ENCODE measurements at regions of chr2 and their contacts with region 1.

Region 1: GRCh38 chr2:174688079-174688478 is 76.2 kb downstream of the CHRNA1 start:
- DNase-seq: peak; percentile 8
- ATAC-seq: peak; percentile 65
- H3K4me3 ChIP-seq: no peak overlapping the region
- H3K27ac ChIP-seq: no peak overlapping the region
- H3K4me1 ChIP-seq: no peaks in the 10 kb centered on the region
- H3K27me3 ChIP-seq: 0 out of 2 replicates have a peak, but pooled peaks cover 4% of the 10 kb centered on the region
- CTCF ChIP-seq: peak; percentile 25 to 61 (median 55); a peak in 3 of 6 replicates
- POLR2A ChIP-seq: no peak
- RAD21 ChIP-seq: peak; percentile 48

Region 2: GRCh38 chr2:174577967-174578589 is 110.0 kb before region 1 on chr2:
- CTCF ChIA-PET with region 1: interaction called, 35 read pairs
- POLR2A ChIA-PET with region 1: no interaction called
- RAD21 ChIA-PET with region 1: no interaction called
- intact Hi-C with region 1: loop called (anchors 2 kb)
- DNase-seq: no peak
- ATAC-seq: peak; percentile 80
- H3K4me3 ChIP-seq: no peak overlapping the region
- H3K27ac ChIP-seq: no peak overlapping the region
- H3K4me1 ChIP-seq: no peaks in the 10 kb centered on the region
- H3K27me3 ChIP-seq: no peaks in the 10 kb centered on the region
- CTCF ChIP-seq: peak; percentile 36 to 57 (median 47); a peak in 5 of 6 replicates
- POLR2A ChIP-seq: no peak
- RAD21 ChIP-seq: peak; percentile 64

Region 3: GRCh38 chr2:174673876-174674275 is 14.2 kb before region 1 on chr2:
- CTCF ChIA-PET with region 1: no interaction called
- POLR2A ChIA-PET with region 1: no interaction called
- RAD21 ChIA-PET with region 1: no interaction called
- intact Hi-C with region 1: no loop called
- DNase-seq: no peak
- ATAC-seq: no peak
- H3K4me3 ChIP-seq: no peak overlapping the region
- H3K27ac ChIP-seq: no peak overlapping the region
- H3K4me1 ChIP-seq: no peaks in the 10 kb centered on the region
- H3K27me3 ChIP-seq: no peaks in the 10 kb centered on the region
- CTCF ChIP-seq: no peak
- POLR2A ChIP-seq: no peak
- RAD21 ChIP-seq: no peak

Measured in HCT116 (cell line).